Heart left ventricle (tissue), 16 donors: ENCODE measurements at regions of chr16 and their contacts with region 1.

Region 1: GRCh38 chr16:6032438-6032837 is 934.8 kb upstream of the EEF2KMT start:
- DNase-seq: no peak
- ATAC-seq: no peak
- H3K4me3 ChIP-seq: no peak overlapping the region
- H3K27ac ChIP-seq: no peak overlapping the region
- H3K4me1 ChIP-seq: no peaks in the 10 kb centered on the region
- H3K27me3 ChIP-seq: peaks cover 0 to 5% (median 0%) of the 10 kb centered on the region in 9 donors
- CTCF ChIP-seq: no peak
- POLR2A ChIP-seq: no peak

Region 2: DNA sequence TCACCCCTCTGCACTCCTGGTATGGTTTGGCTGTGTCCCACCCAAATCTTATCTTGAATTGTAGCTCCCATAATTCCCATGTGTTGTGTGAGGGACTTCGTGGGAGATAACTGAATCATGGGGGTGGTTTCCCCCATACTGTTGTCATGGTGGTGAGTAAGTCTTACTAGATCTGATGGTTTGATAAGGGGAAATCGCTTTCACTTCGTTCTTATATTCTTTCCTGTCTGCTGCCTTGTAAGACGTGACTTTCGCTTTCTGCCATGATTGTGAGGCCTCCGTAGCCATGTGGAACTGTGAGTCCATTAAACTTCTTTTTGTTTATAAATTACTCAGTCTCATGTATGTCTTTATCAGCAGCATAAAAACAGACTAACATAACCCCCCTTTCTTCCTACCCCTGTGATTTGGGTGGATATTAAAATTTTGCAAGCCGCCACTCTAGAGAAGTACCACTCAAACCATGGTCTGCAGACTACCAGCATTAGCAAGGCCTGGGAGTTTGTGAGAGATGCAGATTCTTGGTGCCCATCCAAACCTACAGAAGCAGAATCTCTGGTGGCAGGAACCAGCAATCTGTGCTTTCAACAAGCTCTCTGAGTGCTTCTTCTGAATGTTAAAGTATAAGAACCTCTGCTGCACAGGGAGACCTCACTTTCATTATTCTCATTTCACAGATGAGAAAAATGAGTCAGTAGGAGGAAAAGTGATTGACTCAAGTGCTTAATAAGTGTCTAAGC is 64.7 kb after region 1 on chr16:
- intact Hi-C with region 1: loop called in 1 of 10 experiments (anchors 10 kb)
- DNase-seq: no peak
- ATAC-seq: no peak
- H3K4me3 ChIP-seq: no peak overlapping the region
- H3K27ac ChIP-seq: no peak overlapping the region
- H3K4me1 ChIP-seq: no peaks in the 10 kb centered on the region
- H3K27me3 ChIP-seq: no peaks in the 10 kb centered on the region
- CTCF ChIP-seq: no peak
- POLR2A ChIP-seq: no peak